Endothelial cell of umbilical vein (primary cell): ENCODE measurements at regions of chr6 and their contacts with region 1.

Region 1: GRCh38 chr6:170178561-170179477 is 112.1 kb downstream of the DLL1 start:
- DNase-seq: peak; percentile 76
- H3K4me3 ChIP-seq: no peak overlapping the region
- H3K27ac ChIP-seq: peak overlapping the region; percentile 66
- H3K4me1 ChIP-seq: peaks cover 20% of the 10 kb centered on the region
- H3K27me3 ChIP-seq: no peaks in the 10 kb centered on the region
- CTCF ChIP-seq: no peak
- POLR2A ChIP-seq: no peak

Region 2: DNA sequence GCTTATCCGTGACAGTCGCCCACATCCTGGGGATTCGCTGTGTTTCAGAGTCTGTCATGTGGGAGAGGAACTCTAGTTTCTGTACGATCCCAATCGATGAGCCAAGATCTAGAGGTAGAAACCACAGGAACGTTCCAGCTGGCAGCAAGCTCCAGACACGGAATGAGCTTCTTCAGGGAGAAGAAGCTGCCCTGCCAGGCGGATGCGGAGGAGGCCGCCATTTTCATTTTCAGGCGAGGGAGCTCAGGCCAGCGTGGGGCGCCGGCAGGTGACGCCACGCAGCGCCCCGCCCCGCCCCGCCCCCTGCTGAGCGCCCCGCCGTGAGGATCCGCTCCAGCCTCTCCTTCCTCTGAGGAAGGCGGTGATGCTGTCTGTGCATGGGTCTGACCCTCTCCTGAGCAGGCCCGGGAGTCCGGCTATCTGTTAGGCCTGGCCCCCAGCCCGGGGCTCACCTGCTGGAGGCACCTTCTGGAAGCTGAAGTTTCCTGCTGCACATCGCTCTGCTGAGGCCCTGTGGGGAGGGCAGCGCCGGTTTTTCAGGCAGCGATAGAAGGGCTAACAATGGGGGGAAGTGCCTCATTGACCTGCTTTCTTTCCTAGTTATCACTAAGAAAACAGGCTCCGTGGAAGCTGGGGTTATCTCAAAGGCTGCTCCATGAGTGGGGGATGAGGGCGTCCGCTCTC is 279.9 kb before region 1 on chr6:
- CTCF ChIA-PET with region 1: no interaction called
- POLR2A ChIA-PET with region 1: no interaction called
- dilution Hi-C with region 1: no loop called
- intact Hi-C with region 1: loop called (anchors 2 kb)
- DNase-seq: peak; percentile 92
- H3K4me3 ChIP-seq: no peak overlapping the region
- H3K27ac ChIP-seq: peak overlapping the region; percentile 2
- H3K4me1 ChIP-seq: peaks cover 13% of the 10 kb centered on the region
- H3K27me3 ChIP-seq: no peaks in the 10 kb centered on the region
- CTCF ChIP-seq: no peak
- POLR2A ChIP-seq: no peak

Region 3: GRCh38 chr6:170011204-170012036 is 167.4 kb before region 1 on chr6:
- CTCF ChIA-PET with region 1: no interaction called
- POLR2A ChIA-PET with region 1: no interaction called
- dilution Hi-C with region 1: no loop called
- intact Hi-C with region 1: no loop called
- DNase-seq: peak; percentile 59
- H3K4me3 ChIP-seq: no peak overlapping the region
- H3K27ac ChIP-seq: no peak overlapping the region
- H3K4me1 ChIP-seq: no peaks in the 10 kb centered on the region
- H3K27me3 ChIP-seq: peaks cover 19 to 35% of the 10 kb centered on the region in 2 experiments
- CTCF ChIP-seq: no peak
- POLR2A ChIP-seq: no peak

Region 4: DNA sequence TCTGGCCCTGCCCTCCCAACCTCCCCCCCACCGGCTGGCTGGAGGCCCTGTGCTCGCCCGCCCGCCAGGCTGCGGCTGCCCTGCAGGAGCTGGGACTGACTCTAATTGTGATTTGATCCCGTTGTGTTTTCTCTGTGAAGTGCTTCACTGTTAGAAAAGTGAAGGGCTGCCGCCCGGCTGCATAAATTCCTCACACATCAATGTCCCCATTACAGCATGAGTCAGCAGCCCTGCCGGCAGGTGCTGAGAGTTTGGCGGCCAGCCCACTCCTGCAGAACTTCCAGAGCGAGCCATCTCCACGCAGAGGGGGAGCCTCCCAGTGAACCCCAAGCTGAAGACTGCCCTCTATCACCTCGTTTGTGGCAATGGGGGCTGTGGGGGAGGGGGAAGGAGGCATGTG is 25.8 kb before region 1 on chr6:
- CTCF ChIA-PET with region 1: interaction called, 3 read pairs
- POLR2A ChIA-PET with region 1: no interaction called
- dilution Hi-C with region 1: no loop called
- intact Hi-C with region 1: loop called (anchors 1 kb)
- DNase-seq: no peak
- H3K4me3 ChIP-seq: no peak overlapping the region
- H3K27ac ChIP-seq: no peak overlapping the region
- H3K4me1 ChIP-seq: peaks cover 7% of the 10 kb centered on the region
- H3K27me3 ChIP-seq: no peaks in the 10 kb centered on the region
- CTCF ChIP-seq: no peak
- POLR2A ChIP-seq: no peak

Region 5: GRCh38 chr6:170209572-170210351 is 30.9 kb after region 1 on chr6:
- CTCF ChIA-PET with region 1: no interaction called
- POLR2A ChIA-PET with region 1: no interaction called
- dilution Hi-C with region 1: no loop called
- intact Hi-C with region 1: no loop called
- DNase-seq: no peak
- H3K4me3 ChIP-seq: no peak overlapping the region
- H3K27ac ChIP-seq: no peak overlapping the region
- H3K4me1 ChIP-seq: no peaks in the 10 kb centered on the region
- H3K27me3 ChIP-seq: no peaks in the 10 kb centered on the region
- CTCF ChIP-seq: no peak
- POLR2A ChIP-seq: no peak

Region 6: DNA sequence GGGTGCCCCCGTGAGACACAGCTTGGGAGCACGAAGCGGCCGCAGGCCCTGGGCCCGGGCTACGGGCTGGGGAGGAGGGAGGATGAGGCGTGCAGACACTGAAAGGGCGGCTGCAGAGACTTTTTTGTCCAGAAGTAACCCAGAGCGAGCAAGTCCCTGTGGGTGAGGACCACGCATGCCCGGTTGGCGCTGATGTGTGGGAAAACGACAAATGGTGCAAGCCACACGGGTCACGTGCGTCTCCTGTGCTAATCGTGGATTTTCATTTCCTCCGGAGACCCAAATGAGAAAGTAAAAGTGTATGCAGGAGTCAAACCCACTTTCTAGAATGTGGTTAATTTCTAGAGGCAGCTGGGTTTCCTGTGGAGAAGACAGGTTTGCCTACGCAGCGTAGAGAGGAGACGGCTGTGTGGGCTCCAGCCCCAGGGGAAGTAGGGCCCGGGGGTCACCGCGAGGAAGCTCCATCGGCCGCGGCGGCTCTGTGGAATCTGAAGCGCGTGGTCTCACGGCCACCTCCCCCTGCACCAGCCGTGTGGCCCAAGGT is 93.0 kb after region 1 on chr6:
- CTCF ChIA-PET with region 1: no interaction called
- POLR2A ChIA-PET with region 1: no interaction called
- dilution Hi-C with region 1: no loop called
- intact Hi-C with region 1: no loop called
- DNase-seq: no peak
- H3K4me3 ChIP-seq: no peak overlapping the region
- H3K27ac ChIP-seq: no peak overlapping the region
- H3K4me1 ChIP-seq: no peaks in the 10 kb centered on the region
- H3K27me3 ChIP-seq: peaks cover 2 to 17% of the 10 kb centered on the region in 2 experiments
- CTCF ChIP-seq: no peak
- POLR2A ChIP-seq: no peak

Region 7: DNA sequence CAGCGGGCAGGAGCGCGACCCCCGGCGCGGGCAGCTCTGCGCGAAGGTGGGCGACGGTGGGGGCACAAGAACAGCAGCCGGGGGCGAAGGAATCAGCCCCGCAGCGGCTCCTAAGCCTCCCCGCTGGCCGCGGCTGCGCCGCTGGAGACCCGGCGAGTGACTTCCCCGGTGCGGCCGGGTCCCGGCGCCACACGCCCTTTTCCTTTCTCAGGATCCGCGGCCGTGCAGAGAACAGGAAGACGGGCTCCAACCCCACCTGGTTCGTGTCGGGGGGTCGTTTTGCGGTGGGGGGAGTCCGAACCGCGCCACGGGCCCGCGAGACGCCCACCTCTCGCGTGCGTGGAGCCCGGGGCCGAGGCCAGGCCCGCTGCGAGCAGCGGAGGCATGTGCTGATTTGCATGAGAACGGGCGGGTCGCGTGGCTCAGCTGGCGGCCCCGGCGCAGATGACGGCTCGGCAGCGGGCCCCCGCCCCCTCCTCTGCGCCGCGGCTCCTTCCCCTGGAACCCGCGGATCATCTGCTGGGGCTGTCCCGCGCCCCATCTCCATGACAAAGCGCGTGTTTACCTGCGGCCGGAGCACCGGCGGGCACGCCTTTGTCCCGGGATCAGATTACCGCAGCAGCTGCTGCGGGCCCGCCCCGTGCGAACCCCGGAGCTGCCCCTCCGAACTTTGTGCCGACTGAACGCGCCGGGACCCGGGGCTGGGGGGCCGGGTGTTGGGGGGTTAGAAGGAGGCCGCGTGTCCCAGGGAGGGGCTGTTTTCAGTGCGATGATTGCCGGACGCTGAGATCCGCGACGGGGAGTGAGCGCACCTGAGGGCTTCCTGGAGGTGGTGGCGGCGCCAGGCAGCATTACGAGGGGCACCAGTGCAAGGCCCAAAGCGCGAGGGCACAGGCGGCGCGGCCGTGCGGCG is 116.9 kb after region 1 on chr6:
- CTCF ChIA-PET with region 1: no interaction called
- POLR2A ChIA-PET with region 1: no interaction called
- dilution Hi-C with region 1: no loop called
- intact Hi-C with region 1: loop called (anchors 2 kb)
- DNase-seq: peak; percentile 21
- H3K4me3 ChIP-seq: peak overlapping the region; percentile 14 to 36 (median 34)
- H3K27ac ChIP-seq: no peak overlapping the region
- H3K4me1 ChIP-seq: peaks cover 17% of the 10 kb centered on the region
- H3K27me3 ChIP-seq: peaks cover 29 to 62% of the 10 kb centered on the region in 2 experiments
- CTCF ChIP-seq: no peak
- POLR2A ChIP-seq: no peak

Region 8: GRCh38 chr6:170405311-170405975 is 226.6 kb after region 1 on chr6:
- CTCF ChIA-PET with region 1: no interaction called
- POLR2A ChIA-PET with region 1: no interaction called
- dilution Hi-C with region 1: no loop called
- intact Hi-C with region 1: loop called (anchors 5 kb)
- DNase-seq: peak; percentile 80
- H3K4me3 ChIP-seq: no peak overlapping the region
- H3K27ac ChIP-seq: peak overlapping the region; percentile 97
- H3K4me1 ChIP-seq: peaks cover 24% of the 10 kb centered on the region
- H3K27me3 ChIP-seq: peaks cover 0 to under 1% of the 10 kb centered on the region in 2 experiments
- CTCF ChIP-seq: no peak
- POLR2A ChIP-seq: no peak